ENCODE measurements at regions of chr4 and their contacts with region 1.

Region 1: GRCh38 chr4:24419181-24420034 is 164.9 kb downstream of the DHX15 start:
- DNase-seq: peak; percentile 75
- H3K4me3 Mint-ChIP-seq: no peak overlapping the region
- H3K27ac Mint-ChIP-seq: no peak overlapping the region
- H3K4me1 Mint-ChIP-seq: no peaks in the 10 kb centered on the region
- H3K27me3 Mint-ChIP-seq: no peaks in the 10 kb centered on the region
- CTCF ChIP-seq: peak; percentile 82

Region 2: GRCh38 chr4:23680671-23681518 is 738.5 kb before region 1 on chr4:
- CTCF ChIA-PET with region 1: interaction called, 3 read pairs
- intact Hi-C with region 1: loop called (anchors 10 kb)
- DNase-seq: no peak
- H3K4me3 Mint-ChIP-seq: no peak overlapping the region
- H3K27ac Mint-ChIP-seq: no peak overlapping the region
- H3K4me1 Mint-ChIP-seq: no peaks in the 10 kb centered on the region
- H3K27me3 Mint-ChIP-seq: no peaks in the 10 kb centered on the region
- CTCF ChIP-seq: no peak

Region 3: DNA sequence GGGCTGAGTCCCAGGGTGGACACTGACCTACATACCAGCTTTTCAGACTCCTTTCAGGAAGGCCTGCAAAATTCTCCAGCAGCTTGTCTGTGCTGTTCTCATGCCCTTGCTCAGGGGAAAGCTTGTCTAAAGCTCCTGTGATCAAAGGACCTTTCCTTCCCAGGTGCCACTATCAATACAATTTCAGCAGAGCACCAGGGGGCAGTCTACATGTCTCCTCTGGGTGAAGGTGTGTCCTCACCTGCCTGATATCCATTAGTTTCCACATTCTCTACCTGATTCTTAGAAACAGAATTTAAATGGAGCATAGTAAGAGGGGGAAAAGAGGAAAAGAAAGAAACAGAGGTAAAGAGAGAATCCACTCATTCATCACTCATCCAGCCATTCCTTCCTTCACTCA is 643.7 kb before region 1 on chr4:
- CTCF ChIA-PET with region 1: no interaction called
- intact Hi-C with region 1: loop called (anchors 1 kb)
- DNase-seq: peak; percentile 41
- H3K4me3 Mint-ChIP-seq: no peak overlapping the region
- H3K27ac Mint-ChIP-seq: no peak overlapping the region
- H3K4me1 Mint-ChIP-seq: peaks cover 16% of the 10 kb centered on the region
- H3K27me3 Mint-ChIP-seq: no peaks in the 10 kb centered on the region
- CTCF ChIP-seq: no peak

Region 4: DNA sequence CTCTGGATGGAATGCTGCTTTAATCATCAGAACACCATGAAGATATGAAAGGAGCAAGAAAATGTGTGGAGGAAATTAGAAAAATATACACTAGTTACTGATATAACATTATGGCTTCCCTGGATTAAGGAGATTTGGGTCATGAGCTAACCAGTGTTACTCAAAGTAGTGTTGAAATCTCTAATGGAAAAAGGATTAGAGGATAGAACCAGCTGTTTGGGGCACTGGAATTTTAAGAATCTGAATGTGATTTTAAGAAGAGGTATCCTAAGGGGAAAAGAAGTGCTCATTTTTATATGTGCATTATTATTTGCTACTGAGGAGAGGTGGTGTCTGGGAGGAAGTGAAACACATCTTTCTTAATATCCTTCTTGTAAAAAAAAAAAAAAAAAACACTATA is 365.5 kb before region 1 on chr4:
- CTCF ChIA-PET with region 1: no interaction called
- intact Hi-C with region 1: no loop called
- DNase-seq: no peak
- H3K4me3 Mint-ChIP-seq: no peak overlapping the region
- H3K27ac Mint-ChIP-seq: no peak overlapping the region
- H3K4me1 Mint-ChIP-seq: no peaks in the 10 kb centered on the region
- H3K27me3 Mint-ChIP-seq: no peaks in the 10 kb centered on the region
- CTCF ChIP-seq: no peak

Measured in Calu3 (cell line).